ENCODE measurements at regions of chr2 and their contacts with region 1.

Region 1: DNA sequence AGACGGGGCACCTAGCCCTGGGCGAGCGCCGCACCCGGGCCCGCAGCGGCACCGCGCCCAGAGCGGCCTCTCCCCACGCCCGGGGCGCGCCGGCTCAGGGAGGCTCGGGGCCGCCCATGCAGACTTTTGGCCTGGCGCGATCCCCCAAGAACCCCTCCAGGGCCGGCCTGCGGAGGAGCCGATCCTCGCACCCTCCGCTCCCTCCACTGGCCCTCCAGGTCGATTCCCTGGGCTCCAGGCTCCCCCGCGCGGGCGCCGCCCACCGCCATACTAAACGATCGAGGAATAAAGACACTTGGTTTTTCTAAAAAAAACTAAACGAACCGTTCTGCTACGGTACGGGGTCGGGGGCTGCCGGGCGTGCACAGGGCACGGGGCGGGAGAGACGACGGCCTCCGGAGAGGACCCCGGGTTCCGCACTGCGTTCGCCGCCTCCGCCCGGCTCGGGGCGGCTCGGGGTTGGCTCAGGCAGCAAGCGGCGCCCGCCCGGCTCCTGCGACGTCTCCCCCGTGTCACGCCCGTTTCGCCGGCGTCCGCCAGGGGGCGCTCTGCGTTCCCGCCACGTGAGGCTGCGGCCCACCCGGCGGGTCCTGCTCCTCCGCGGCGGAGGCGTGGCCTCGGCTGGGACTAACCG is 365 bp upstream of the KHK start:
- DNase-seq: peak; percentile 49
- H3K4me3 ChIP-seq: peak overlapping the region; percentile 49
- H3K27me3 ChIP-seq: no peaks in the 10 kb centered on the region
- CTCF ChIP-seq: peak; percentile 51

Region 2: GRCh38 chr2:26922405-26923188 is 163.6 kb before region 1 on chr2:
- CTCF ChIA-PET with region 1: no interaction called
- POLR2A ChIA-PET with region 1: no interaction called
- DNase-seq: no peak
- H3K4me3 ChIP-seq: no peak overlapping the region
- H3K27me3 ChIP-seq: peaks cover 6% of the 10 kb centered on the region
- CTCF ChIP-seq: peak; percentile 52

Region 3: DNA sequence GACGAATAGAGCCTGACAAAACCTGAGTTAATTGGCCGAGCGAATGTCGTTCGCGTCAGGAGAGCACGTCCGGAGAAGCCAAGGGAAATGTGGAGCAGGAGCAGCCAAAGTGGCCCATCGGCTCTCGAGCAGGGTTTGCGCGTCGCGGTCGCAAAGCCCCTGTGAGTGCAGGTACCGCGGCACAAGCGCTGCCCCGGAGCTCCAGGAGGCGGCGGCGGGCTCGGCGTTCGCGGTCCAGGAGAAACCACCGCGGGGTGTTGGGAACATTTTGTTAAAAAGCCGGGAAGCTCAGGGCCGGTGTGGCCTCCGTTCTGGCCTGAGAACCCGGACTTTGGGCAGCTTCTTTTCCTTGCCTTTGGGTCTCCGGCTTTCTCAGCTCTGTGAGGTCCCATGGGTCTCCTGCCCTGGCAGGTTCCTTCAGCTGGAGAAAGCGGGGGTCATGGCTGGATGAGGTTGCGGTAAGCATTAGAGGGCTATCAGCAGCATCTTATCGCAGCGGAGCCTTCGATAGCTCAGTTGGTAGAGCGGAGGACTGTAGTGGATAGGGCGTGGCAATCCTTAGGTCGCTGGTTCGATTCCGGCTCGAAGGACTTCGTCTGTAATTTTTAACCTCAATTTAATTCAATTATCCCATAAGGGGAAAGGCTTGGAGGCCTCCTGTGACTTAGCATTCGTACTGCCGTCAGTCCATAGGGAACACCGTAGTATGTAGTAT is 35.8 kb before region 1 on chr2:
- CTCF ChIA-PET with region 1: interaction called, 28 read pairs
- POLR2A ChIA-PET with region 1: no interaction called
- DNase-seq: no peak
- H3K4me3 ChIP-seq: peak overlapping the region; percentile 66
- H3K27me3 ChIP-seq: no peaks in the 10 kb centered on the region
- CTCF ChIP-seq: peak; percentile 53; the same call in 1 of the 2 replicates

Region 4: GRCh38 chr2:27102329-27102728 is 16.1 kb after region 1 on chr2:
- CTCF ChIA-PET with region 1: interaction called, 12 read pairs
- POLR2A ChIA-PET with region 1: no interaction called
- DNase-seq: no peak
- H3K4me3 ChIP-seq: no peak overlapping the region
- H3K27me3 ChIP-seq: peaks cover 1% of the 10 kb centered on the region; the same call in 1 of the 2 replicates
- CTCF ChIP-seq: no peak